Gastrocnemius medialis (tissue), 4 donors: ENCODE measurements at regions of chr2 and their contacts with region 1.

Region 1: GRCh38 chr2:144510294-144510991 is 9.5 kb downstream of the ZEB2 start:
- DNase-seq: peak; percentile 66 to 77
- ATAC-seq: peak; percentile 76 to 82
- H3K4me3 ChIP-seq: peak overlapping the region; percentile 48 to 89 (median 77)
- H3K27ac ChIP-seq: peak overlapping the region; percentile 94 to 96 (median 95)
- H3K4me1 ChIP-seq: peaks cover 79 to 87% of the 10 kb centered on the region in 2 donors
- H3K27me3 ChIP-seq: no peaks in the 10 kb centered on the region
- CTCF ChIP-seq: no peak
- POLR2A ChIP-seq: peak; percentile 38 to 78

Region 2: GRCh38 chr2:144084114-144084661 is 426.3 kb before region 1 on chr2:
- in situ Hi-C with region 1: no loop called
- intact Hi-C with region 1: no loop called
- DNase-seq: no peak
- ATAC-seq: no peak
- H3K4me3 ChIP-seq: no peak overlapping the region
- H3K27ac ChIP-seq: no peak overlapping the region
- H3K4me1 ChIP-seq: no peaks in the 10 kb centered on the region
- H3K27me3 ChIP-seq: no peaks in the 10 kb centered on the region
- CTCF ChIP-seq: no peak
- POLR2A ChIP-seq: no peak

Region 3: GRCh38 chr2:144325086-144325485 is 185.4 kb before region 1 on chr2:
- in situ Hi-C with region 1: loop called in 3 of 4 experiments (anchors 5 to 25 kb)
- intact Hi-C with region 1: no loop called
- DNase-seq: no peak
- ATAC-seq: no peak
- H3K4me3 ChIP-seq: no peak overlapping the region
- H3K27ac ChIP-seq: no peak overlapping the region
- H3K4me1 ChIP-seq: peaks cover under 1 to 18% of the 10 kb centered on the region in 2 donors
- H3K27me3 ChIP-seq: no peaks in the 10 kb centered on the region
- CTCF ChIP-seq: no peak
- POLR2A ChIP-seq: no peak